A673 (cell line): ENCODE measurements at regions of chr4 and their contacts with region 1.

Region 1: GRCh38 chr4:109820563-109820962 is 5.0 kb downstream of the GAR1 start:
- DNase-seq: peak; percentile 49
- H3K4me3 ChIP-seq: no peak overlapping the region
- H3K27ac ChIP-seq: no peak overlapping the region
- H3K4me1 ChIP-seq: peaks cover 15% of the 10 kb centered on the region
- H3K27me3 ChIP-seq: no peaks in the 10 kb centered on the region
- CTCF ChIP-seq: no peak

Region 2: DNA sequence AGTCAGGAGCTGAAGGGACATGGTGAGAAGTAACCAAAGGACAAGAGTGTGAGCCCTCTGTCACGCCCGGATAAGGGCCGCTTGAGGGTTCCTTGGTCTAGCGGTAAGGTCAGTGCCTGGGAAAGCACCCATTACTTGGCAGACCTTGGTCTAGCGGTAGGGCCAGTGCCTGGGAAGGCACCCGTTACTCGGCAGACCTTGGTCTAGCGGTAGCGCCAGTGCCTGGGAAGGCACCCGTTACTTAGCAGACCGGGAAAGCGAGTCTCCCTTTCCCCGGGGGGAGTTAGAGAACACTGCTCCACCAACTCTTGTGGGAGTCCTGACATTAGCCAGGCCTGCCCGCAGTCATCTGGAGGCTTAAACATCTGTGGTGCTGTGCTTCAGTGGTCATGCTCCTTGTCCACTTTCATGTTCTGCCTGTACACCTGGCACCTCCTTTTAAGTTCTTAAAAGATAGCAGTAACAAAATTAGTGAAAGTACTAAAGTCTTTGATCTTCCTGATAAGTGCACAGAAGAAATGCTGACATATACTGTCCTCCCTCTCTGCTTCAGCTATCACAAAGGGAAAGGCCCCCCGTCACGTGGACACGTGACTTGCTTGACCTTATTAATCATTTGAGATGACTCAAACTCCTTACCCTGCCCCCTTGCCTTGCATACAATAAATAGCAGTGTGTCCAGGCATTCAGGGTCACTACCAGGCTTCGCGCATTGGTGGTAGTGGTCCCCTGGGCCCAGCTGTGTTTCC is 396.3 kb before region 1 on chr4:
- CTCF ChIA-PET with region 1: no interaction called
- POLR2A ChIA-PET with region 1: no interaction called
- intact Hi-C with region 1: loop called (anchors 5 kb)
- DNase-seq: no peak
- H3K4me3 ChIP-seq: no peak overlapping the region
- H3K27ac ChIP-seq: no peak overlapping the region
- H3K4me1 ChIP-seq: peaks cover 8% of the 10 kb centered on the region
- H3K27me3 ChIP-seq: no peaks in the 10 kb centered on the region
- CTCF ChIP-seq: no peak